ENCODE measurements at regions of chr1 and their contacts with region 1.

Region 1: DNA sequence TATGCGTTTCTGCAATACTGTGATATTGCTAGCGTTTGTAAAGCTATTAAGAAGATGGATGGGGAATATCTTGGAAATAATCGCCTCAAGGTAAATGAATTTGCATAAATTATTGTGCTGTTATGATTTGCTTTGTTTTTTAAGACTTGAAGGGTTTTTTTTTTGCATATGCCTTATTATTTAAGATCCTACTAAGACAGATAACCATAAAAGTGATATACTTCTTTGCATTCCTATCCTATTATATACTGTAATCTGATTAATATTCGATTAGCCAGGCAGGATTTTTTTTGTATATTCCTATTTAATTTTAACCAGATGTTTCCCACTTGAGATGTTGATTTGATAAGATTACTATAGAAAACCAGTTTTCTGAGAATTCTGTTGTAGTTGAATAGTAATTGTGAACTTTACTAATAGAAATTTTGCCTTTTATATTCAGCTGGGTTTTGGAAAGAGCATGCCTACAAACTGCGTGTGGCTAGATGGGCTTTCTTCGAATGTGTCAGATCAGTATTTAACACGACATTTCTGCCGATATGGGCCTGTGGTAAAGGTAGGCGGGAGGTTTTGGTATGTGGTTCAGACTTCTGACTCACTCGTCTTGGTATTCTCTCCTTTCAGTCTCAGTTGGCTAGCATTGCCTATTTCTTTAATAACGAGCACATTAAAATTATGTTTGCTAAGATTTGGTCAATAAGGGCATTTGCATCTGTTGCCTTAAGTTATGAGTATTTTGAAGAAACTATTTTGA is 56.8 kb downstream of the ZBTB17 start:
- DNase-seq: peak; percentile 88
- H3K4me3 Mint-ChIP-seq: peak overlapping the region; percentile 66
- H3K27ac Mint-ChIP-seq: peak overlapping the region; percentile 72
- H3K4me1 Mint-ChIP-seq: peaks cover 35% of the 10 kb centered on the region
- H3K27me3 Mint-ChIP-seq: no peaks in the 10 kb centered on the region

Region 2: GRCh38 chr1:15411593-15412137 is 507.5 kb before region 1 on chr1:
- intact Hi-C with region 1: no loop called
- DNase-seq: peak; percentile 84
- H3K4me3 Mint-ChIP-seq: peak overlapping the region; percentile 96
- H3K27ac Mint-ChIP-seq: peak overlapping the region; percentile 91
- H3K4me1 Mint-ChIP-seq: peaks cover 56% of the 10 kb centered on the region
- H3K27me3 Mint-ChIP-seq: peaks cover 23% of the 10 kb centered on the region

Region 3: GRCh38 chr1:15835741-15836510 is 83.2 kb before region 1 on chr1:
- intact Hi-C with region 1: loop called (anchors 5 kb)
- DNase-seq: peak; percentile 100
- H3K4me3 Mint-ChIP-seq: peak overlapping the region; percentile 95
- H3K27ac Mint-ChIP-seq: peak overlapping the region; percentile 99
- H3K4me1 Mint-ChIP-seq: peaks cover 29% of the 10 kb centered on the region
- H3K27me3 Mint-ChIP-seq: peaks cover 2% of the 10 kb centered on the region

Region 4: DNA sequence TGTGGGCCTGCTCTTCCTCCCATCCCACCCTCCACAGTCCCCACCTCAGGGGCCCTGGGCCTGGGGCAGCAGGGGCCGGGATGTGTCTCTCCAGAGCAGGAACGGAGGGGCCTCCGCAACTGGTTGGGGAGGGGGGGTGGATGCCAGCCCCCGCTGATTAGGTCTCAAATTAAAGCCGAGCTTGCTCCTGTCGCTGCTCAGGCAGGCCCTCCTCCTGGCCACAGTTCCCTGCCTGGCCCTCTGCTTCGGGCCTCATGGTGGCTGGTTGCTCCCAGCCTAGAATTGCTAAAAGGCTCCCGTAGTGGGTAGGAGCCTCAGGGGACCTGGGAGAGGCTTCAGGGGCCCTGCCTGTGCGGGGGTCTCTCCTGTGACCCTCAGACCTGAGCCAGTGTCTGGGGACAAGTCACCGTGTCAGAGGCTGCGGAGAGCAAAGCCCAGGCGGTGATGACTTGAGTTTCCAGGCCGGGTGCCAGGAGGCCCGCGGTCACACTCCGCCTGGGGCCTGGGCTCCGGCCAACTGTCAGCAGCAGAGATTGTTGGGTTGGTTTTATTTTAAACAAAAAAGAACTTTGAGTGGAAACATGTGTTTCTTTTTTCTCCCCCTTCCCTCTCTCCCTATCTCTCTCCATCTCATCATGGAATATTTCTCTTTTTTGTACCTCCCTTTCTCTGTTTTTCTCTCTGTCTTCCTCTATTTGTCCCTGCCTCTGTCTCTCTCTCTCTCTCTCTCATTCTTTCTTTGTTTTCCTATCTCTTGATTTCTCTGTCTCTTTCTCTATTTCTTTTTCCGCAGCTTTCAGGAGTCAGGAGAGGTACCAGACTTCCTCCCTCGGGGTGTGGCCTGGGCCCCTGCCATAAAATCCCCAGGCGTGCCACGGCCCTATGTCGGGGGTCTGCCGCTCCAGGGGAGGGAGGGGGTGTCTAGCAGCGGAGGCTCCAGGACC is 256.7 kb after region 1 on chr1:
- intact Hi-C with region 1: no loop called
- DNase-seq: no peak
- H3K4me3 Mint-ChIP-seq: no peak overlapping the region
- H3K27ac Mint-ChIP-seq: no peak overlapping the region
- H3K4me1 Mint-ChIP-seq: no peaks in the 10 kb centered on the region
- H3K27me3 Mint-ChIP-seq: peaks cover 7% of the 10 kb centered on the region

Measured in activated CD4-positive, alpha-beta T cell treated with anti-CD3 and anti-CD28 coated beads, Interleukin-2, amount 10 ng/mL, durations not matched to agents 24 days and 14 days (primary cell).